ENCODE measurements at regions of chr2 and their contacts with region 1.

Region 1: GRCh38 chr2:108533832-108534583 is at the start of gene LIMS1:
- DNase-seq: peak; percentile 83 to 85 (median 84)
- H3K4me3 ChIP-seq: peak within 1 kb of the TSS; percentile 80 to 98 (median 81)
- H3K4me3 Mint-ChIP-seq: peak within 1 kb of the TSS; percentile 94 to 98
- H3K27ac ChIP-seq: peak within 1 kb of the TSS; percentile 72 to 87
- H3K27ac Mint-ChIP-seq: peak within 1 kb of the TSS; percentile 85 to 93 (median 91)
- H3K4me1 ChIP-seq: peaks cover 15 to 25% of the 10 kb centered on the region in 2 donors
- H3K4me1 Mint-ChIP-seq: peaks cover 43% of the 10 kb centered on the region
- H3K27me3 ChIP-seq: no peaks in the 10 kb centered on the region
- H3K27me3 Mint-ChIP-seq: peaks cover 0 to 1% (median 1%) of the 10 kb centered on the region in 3 donors
- CTCF ChIP-seq: no peak
- polyA plus RNA-seq, gene LIMS1: 44.0 to 130 (median 124) TPM

Region 2: GRCh38 chr2:108448678-108449493 is 85.1 kb before region 1 on chr2 and contains the start of gene GCC2:
- intact Hi-C with region 1: loop called (anchors 5 to 10 kb)
- DNase-seq: peak; percentile 94 to 96 (median 95)
- H3K4me3 ChIP-seq: peak within 1 kb of the TSS; percentile 89 to 97 (median 92)
- H3K4me3 Mint-ChIP-seq: peak within 1 kb of the TSS; percentile 92 to 97
- H3K27ac ChIP-seq: peak within 1 kb of the TSS; percentile 88 to 98
- H3K27ac Mint-ChIP-seq: peak within 1 kb of the TSS; percentile 92 to 99 (median 99)
- H3K4me1 ChIP-seq: peaks cover 15 to 24% of the 10 kb centered on the region in 2 donors
- H3K4me1 Mint-ChIP-seq: peaks cover 18% of the 10 kb centered on the region
- H3K27me3 ChIP-seq: no peaks in the 10 kb centered on the region
- H3K27me3 Mint-ChIP-seq: peaks cover 0 to 4% (median 0%) of the 10 kb centered on the region in 3 donors
- CTCF ChIP-seq: no peak
- polyA plus RNA-seq, gene GCC2: 6.0 to 13.7 (median 6.6) TPM